Right lobe of liver (tissue), 6 donors: ENCODE measurements at regions of chr3 and their contacts with region 1.

Region 1: GRCh38 chr3:10764259-10765051 is 51.6 kb upstream of the SLC6A11 start:
- DNase-seq: peak in 1 of 3 donors; percentile 37
- ATAC-seq: no peak
- H3K4me3 ChIP-seq: no peak overlapping the region
- H3K27ac ChIP-seq: no peak overlapping the region
- H3K4me1 ChIP-seq: no peaks in the 10 kb centered on the region
- H3K27me3 ChIP-seq: no peaks in the 10 kb centered on the region
- CTCF ChIP-seq: no peak
- POLR2A ChIP-seq: no peak

Region 2: DNA sequence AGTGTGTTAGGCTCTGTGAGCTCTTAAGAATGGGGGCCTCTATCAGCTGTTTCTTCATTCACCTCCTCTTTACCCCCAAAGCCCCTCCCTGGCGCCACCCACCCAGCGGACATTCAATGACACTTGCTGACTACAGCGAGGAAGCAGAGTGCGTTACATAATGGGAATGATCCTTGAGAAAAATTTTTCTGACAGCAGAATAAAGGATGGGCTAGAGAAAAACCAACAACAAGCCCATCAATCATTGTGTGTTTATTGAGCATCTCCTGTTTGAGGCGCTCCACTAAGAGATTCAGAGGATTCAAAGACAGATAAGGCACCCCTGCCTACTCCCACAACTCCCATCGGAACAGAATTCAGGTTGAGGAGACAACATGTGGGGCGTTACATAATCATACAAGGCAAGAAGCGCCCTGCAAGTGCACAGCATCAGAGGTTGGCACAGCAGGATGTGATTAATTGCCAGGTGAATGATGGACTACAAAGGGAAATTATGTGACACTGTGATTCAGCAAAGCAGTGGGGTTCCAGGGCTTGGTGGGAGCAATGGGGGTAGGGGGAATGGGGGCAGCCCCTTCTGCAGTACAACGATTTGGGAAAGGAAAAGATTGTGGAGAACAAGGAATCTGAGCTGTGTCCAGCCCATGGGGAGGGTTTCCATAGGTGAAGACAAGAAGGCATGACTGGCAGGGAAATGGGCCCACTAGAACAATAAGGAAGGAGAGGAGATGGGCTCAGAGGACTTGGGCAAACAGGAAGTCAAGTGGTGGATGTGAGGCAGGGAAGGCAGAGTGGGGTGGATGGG is 117.7 kb before region 1 on chr3:
- intact Hi-C with region 1: no loop called
- DNase-seq: no peak
- ATAC-seq: no peak
- H3K4me3 ChIP-seq: no peak overlapping the region
- H3K27ac ChIP-seq: no peak overlapping the region
- H3K4me1 ChIP-seq: no peaks in the 10 kb centered on the region
- H3K27me3 ChIP-seq: no peaks in the 10 kb centered on the region
- CTCF ChIP-seq: no peak
- POLR2A ChIP-seq: no peak

Region 3: GRCh38 chr3:10876661-10877060 is 112.2 kb after region 1 on chr3:
- intact Hi-C with region 1: loop called (anchors 5 to 10 kb)
- DNase-seq: no peak
- ATAC-seq: no peak
- H3K4me3 ChIP-seq: no peak overlapping the region
- H3K27ac ChIP-seq: no peak overlapping the region
- H3K4me1 ChIP-seq: no peaks in the 10 kb centered on the region
- H3K27me3 ChIP-seq: no peaks in the 10 kb centered on the region
- CTCF ChIP-seq: no peak
- POLR2A ChIP-seq: no peak